ENCODE measurements at regions of chr16 and their contacts with region 1.

Region 1: GRCh38 chr16:68079626-68080344 is 5.4 kb upstream of the NFATC3 start:
- DNase-seq: peak; percentile 93
- H3K4me3 Mint-ChIP-seq: peak overlapping the region; percentile 81
- H3K27ac Mint-ChIP-seq: peak overlapping the region; percentile 97
- H3K4me1 Mint-ChIP-seq: peaks cover 84% of the 10 kb centered on the region
- H3K27me3 Mint-ChIP-seq: no peaks in the 10 kb centered on the region

Region 2: DNA sequence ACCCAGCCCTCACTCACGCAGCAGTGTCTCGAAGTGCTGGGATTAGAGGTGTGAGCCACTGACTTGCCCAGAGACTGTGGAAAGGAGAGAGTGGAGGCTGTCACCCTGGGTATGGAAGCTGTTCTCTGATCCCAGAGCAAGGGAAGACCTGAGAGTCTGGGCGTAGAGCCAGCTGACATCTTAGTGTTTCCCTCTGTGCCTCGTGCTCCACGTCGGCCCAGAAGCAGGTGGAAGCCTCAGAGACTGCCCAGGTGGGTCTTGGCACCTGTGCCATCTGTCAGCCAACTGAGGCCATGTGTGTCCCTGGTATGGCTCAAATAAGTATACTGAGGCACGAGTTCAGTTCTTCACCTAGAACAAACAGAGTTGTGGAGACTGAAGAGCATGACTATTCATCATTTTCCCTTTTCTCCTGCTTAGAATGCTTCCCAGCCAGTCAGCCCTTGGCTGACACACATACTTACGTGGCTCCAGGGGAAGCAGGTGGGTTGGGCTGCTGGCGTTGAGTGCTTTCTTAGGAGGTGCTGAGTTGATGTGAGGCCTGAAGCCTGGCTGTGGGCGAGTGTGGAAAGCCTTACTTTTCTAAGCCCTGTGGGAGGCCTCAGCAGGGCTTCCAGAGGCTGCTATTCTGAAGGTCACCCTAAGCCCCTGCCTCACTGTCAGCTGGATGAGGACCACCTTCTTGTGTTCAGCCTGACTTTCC is 156.2 kb before region 1 on chr16:
- intact Hi-C with region 1: no loop called
- DNase-seq: no peak
- H3K4me3 Mint-ChIP-seq: no peak overlapping the region
- H3K27ac Mint-ChIP-seq: no peak overlapping the region
- H3K4me1 Mint-ChIP-seq: peaks cover 14% of the 10 kb centered on the region
- H3K27me3 Mint-ChIP-seq: no peaks in the 10 kb centered on the region

Region 3: DNA sequence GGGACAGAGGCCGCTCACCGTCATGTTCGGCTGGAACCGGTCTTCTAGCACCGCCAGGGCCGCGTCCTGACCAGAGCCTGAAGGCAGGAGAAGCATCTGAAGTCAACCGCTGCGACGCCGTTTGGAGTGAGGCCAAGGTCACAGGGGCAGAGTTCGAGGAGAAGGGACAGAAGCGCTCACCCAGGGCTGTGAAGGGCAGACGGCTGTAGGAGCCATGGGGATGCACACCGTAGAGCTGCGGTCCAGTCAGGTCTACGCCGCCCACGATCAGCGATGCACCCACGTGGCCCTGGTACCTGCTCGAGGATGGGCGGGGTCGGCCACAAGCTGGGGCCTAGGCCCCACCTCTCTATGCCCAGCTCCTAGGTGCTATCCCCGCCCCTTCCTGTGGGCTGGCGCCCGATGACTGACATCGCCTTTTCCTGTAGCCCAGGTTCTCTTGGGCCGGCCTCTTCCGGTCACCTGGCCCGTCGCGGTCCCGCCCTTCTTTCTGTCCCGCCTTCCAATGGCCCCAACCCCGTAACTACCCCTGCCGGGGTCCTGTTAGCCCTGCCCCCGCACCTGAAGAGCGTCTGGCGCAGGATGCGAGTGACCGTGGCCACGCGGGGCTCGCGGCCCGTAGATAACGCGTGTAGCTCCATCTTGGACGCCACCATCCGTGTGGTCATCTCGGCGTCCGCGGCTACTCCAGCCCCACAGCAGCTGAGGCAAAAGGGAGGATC is 144.2 kb before region 1 on chr16:
- intact Hi-C with region 1: no loop called
- DNase-seq: peak; percentile 98
- H3K4me3 Mint-ChIP-seq: peak overlapping the region; percentile 100
- H3K27ac Mint-ChIP-seq: peak overlapping the region; percentile 92
- H3K4me1 Mint-ChIP-seq: peaks cover 33% of the 10 kb centered on the region
- H3K27me3 Mint-ChIP-seq: no peaks in the 10 kb centered on the region

Region 4: GRCh38 chr16:68064791-68065365 is 14.9 kb before region 1 on chr16:
- intact Hi-C with region 1: loop called (anchors 1 kb)
- DNase-seq: peak; percentile 92
- H3K4me3 Mint-ChIP-seq: peak overlapping the region; percentile 32
- H3K27ac Mint-ChIP-seq: peak overlapping the region; percentile 79
- H3K4me1 Mint-ChIP-seq: peaks cover 64% of the 10 kb centered on the region
- H3K27me3 Mint-ChIP-seq: no peaks in the 10 kb centered on the region

Measured in activated CD4-positive, alpha-beta T cell treated with anti-CD3 and anti-CD28 coated beads, Interleukin-2, amount 10 ng/mL, durations not matched to agents 24 days and 14 days (primary cell).